CD4-positive, alpha-beta memory T cell (primary cell): ENCODE measurements at regions of chr16 and their contacts with region 1.

Region 1: DNA sequence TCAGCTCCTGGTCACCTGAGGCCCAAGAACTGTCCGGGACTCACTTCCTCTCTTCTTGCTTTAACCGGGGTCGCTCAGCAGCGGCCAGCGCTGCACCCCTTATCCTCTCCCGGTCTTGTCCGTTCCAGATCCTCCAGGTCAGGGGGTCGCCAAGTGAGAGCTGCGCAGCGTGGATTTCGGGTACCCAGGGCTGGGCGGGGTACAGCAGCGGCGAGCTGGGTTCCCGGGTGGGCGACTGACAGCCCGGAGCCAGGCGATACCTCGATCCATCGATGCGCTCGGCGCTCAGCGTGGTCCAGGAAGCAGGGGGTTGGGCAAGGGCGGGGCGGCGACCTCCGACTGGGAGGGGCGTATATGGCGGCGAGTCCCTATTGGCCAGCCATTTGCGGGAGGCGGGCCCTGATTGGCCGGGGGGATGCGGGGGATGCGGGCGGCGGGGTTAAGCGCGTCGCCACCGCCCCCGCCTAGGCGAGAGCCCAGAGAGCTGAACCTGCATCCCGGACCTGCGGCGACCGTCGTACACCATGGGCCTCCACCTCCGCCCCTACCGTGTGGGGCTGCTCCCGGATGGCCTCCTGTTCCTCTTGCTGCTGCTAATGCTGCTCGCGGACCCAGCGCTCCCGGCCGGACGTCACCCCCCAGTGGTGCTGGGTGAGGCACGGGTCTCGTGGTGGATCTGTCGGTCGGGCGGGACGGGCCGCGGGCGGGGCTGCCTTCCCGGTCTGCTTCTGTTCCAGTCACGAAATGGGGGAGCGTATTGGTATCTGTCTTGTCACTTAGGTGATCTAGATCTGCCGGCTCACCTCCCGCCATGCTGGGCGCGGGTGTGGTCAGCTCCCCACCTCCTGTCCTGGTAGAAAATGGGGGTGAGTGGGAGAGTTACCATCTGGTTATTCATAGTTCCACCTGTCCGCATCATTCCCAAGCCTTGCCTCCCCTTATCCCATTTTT is at the start of gene PLA2G15:
- DNase-seq: peak; percentile 93 to 96 (median 94)
- H3K4me3 ChIP-seq: peak within 1 kb of the TSS; percentile 91 to 98
- H3K4me3 Mint-ChIP-seq: peak within 1 kb of the TSS; percentile 93 to 99 (median 98)
- H3K27ac ChIP-seq: peak within 1 kb of the TSS; percentile 58
- H3K27ac Mint-ChIP-seq: peak within 1 kb of the TSS; percentile 77 to 95 (median 93)
- H3K4me1 ChIP-seq: peaks cover 27% of the 10 kb centered on the region
- H3K4me1 Mint-ChIP-seq: peaks cover 15 to 31% (median 20%) of the 10 kb centered on the region in 4 donors
- H3K27me3 ChIP-seq: no peaks in the 10 kb centered on the region
- H3K27me3 Mint-ChIP-seq: no peaks in the 10 kb centered on the region
- total RNA-seq, gene PLA2G15: 12.0 to 13.3 TPM

Region 2: DNA sequence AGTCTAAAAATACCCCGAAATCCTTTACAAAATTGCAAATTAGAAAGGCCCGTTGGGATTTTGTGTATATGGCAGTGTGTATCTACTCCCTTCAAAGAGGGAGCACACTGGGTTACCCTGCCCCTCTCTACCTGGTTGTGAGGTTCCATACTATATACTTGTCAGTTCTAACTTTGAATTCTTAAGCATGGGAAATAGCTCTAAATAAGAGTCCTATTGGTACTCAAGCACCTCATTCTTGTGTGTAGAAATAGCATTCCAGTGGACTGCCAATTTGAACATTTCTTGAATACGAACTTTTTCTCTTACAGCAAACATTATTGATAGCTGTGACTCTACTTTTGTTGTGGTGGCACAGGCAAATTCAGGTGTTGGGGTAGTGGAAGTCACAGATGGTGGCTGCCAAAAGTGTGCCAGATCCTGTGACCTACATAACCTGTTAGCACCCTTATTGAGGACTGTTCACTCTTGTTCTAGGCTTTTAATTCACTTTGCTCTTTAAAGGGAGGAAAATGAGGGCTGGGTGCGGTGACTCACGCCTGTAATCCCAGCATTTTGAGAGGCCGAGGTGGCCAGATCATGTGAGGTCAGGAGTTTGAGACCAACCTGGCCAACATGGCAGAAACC is 25.3 kb before region 1 on chr16:
- CTCF ChIA-PET with region 1: no interaction called
- POLR2A ChIA-PET with region 1: no interaction called
- intact Hi-C with region 1: no loop called
- DNase-seq: no peak
- H3K4me3 ChIP-seq: no peak overlapping the region
- H3K4me3 Mint-ChIP-seq: peak overlapping the region in 1 of 8 donors; percentile 15
- H3K27ac ChIP-seq: no peak overlapping the region
- H3K27ac Mint-ChIP-seq: peak overlapping the region in 3 of 7 donors; percentile 55 to 87 (median 63)
- H3K4me1 ChIP-seq: peaks cover 3% of the 10 kb centered on the region
- H3K4me1 Mint-ChIP-seq: peaks cover 8 to 20% (median 13%) of the 10 kb centered on the region in 4 donors
- H3K27me3 ChIP-seq: no peaks in the 10 kb centered on the region
- H3K27me3 Mint-ChIP-seq: no peaks in the 10 kb centered on the region

Region 3: DNA sequence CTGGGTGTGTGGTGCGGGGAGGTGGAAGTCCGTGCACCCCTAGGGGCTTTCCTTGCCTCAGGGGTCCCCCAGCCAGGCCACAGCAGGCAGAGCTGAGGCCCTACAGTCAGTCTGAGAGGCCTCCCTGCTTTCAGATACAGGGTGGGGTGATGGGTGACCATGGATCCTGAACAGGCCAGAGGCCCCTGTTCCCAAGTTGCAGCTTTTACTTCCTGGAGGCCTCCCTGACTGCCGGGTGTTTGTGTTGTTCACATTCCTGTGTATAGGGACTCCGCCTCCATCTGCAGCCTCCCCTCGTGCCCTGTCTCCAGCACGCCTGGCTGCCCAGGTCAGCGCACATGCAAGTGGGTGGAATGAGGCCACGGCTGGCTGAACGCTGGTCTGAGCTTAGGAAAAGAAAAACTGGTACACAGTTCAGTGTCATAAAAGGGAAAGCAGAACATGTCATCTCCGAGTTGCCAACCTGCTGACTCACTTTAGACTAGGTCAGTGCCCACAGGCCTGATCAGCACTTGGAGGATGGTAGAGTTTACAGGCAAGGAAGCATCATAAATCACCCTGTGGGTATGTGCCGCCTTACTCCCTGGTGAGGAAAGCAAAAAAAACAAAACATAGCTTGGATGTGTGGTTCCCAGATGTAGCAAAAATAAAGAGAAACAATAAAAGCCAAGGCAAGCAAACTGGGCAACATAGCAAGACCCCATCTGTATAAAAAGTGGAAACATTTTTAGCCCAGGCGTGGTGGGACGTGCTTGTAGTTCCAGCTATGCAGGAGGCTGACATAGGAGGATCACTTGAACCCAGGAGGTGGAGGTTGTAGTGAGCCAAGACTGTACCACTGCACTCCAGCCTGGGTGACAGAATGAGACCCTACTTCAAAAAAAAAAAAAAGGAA is 13.0 kb after region 1 on chr16:
- CTCF ChIA-PET with region 1: interaction called, 34 read pairs
- POLR2A ChIA-PET with region 1: interaction called, 30 read pairs
- intact Hi-C with region 1: no loop called
- DNase-seq: no peak
- H3K4me3 ChIP-seq: no peak overlapping the region
- H3K4me3 Mint-ChIP-seq: no peak overlapping the region
- H3K27ac ChIP-seq: no peak overlapping the region
- H3K27ac Mint-ChIP-seq: peak overlapping the region in 4 of 7 donors; percentile 12 to 86 (median 49)
- H3K4me1 ChIP-seq: peaks cover 10% of the 10 kb centered on the region
- H3K4me1 Mint-ChIP-seq: peaks cover 8 to 19% (median 9%) of the 10 kb centered on the region in 4 donors
- H3K27me3 ChIP-seq: no peaks in the 10 kb centered on the region
- H3K27me3 Mint-ChIP-seq: no peaks in the 10 kb centered on the region

Region 4: DNA sequence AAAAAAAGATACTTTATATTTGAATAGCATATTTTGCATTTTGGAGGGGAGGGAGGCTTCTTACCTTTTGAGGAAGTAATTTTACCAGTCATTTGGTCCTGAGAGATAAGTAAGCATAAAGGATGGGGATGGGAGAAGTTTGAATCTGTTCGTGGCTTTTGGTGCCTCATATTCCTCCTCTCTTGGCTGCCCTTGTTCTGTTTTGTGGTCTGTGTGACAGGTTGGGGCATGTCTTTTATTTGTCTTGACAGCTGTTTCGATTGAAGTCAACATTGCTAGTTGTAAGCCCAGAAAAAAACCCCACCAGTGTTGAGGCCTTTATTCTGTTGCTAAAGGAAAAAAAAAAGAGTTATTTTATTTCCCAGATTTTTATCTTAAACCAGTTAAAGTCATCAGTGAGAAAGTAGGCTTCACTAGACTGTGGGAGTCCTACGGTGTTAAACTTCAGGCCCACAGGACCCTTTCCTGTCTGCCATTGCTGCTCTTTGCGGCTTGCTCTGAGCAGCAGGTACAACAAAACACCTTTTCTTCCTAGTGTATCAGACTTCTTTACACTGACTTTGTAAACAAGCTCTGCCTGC is 30.5 kb after region 1 on chr16:
- CTCF ChIA-PET with region 1: no interaction called
- POLR2A ChIA-PET with region 1: interaction called, 12 read pairs
- intact Hi-C with region 1: no loop called
- DNase-seq: peak; percentile 72 to 83 (median 76)
- H3K4me3 ChIP-seq: peak overlapping the region in 1 of 2 donors; percentile 24
- H3K4me3 Mint-ChIP-seq: peak overlapping the region; percentile 74 to 86 (median 79)
- H3K27ac ChIP-seq: peak overlapping the region; percentile 50
- H3K27ac Mint-ChIP-seq: peak overlapping the region; percentile 84 to 97 (median 94)
- H3K4me1 ChIP-seq: peaks cover 81% of the 10 kb centered on the region
- H3K4me1 Mint-ChIP-seq: peaks cover 46 to 81% (median 66%) of the 10 kb centered on the region in 4 donors
- H3K27me3 ChIP-seq: no peaks in the 10 kb centered on the region
- H3K27me3 Mint-ChIP-seq: no peaks in the 10 kb centered on the region

Region 5: GRCh38 chr16:68289621-68290329 is 44.6 kb after region 1 on chr16:
- CTCF ChIA-PET with region 1: interaction called, 4 read pairs
- POLR2A ChIA-PET with region 1: interaction called, 11 read pairs
- intact Hi-C with region 1: no loop called
- DNase-seq: peak; percentile 41 to 72 (median 56)
- H3K4me3 ChIP-seq: peak overlapping the region in 1 of 2 donors; percentile 4
- H3K4me3 Mint-ChIP-seq: peak overlapping the region; percentile 32 to 83 (median 66)
- H3K27ac ChIP-seq: peak overlapping the region; percentile 52
- H3K27ac Mint-ChIP-seq: peak overlapping the region; percentile 82 to 91 (median 89)
- H3K4me1 ChIP-seq: peaks cover 83% of the 10 kb centered on the region
- H3K4me1 Mint-ChIP-seq: peaks cover 63 to 92% (median 80%) of the 10 kb centered on the region in 4 donors
- H3K27me3 ChIP-seq: no peaks in the 10 kb centered on the region
- H3K27me3 Mint-ChIP-seq: no peaks in the 10 kb centered on the region